ENCODE measurements at regions of chr19 and their contacts with region 1.

Region 1: GRCh38 chr19:38647368-38647965 is at the start of gene ACTN4:
- DNase-seq: peak; percentile 99 to 100 (median 100)
- H3K4me3 ChIP-seq: peak within 1 kb of the TSS; percentile 77
- H3K27ac ChIP-seq: peak within 1 kb of the TSS; percentile 27 to 47
- H3K4me1 ChIP-seq: peaks cover 26% of the 10 kb centered on the region
- H3K27me3 ChIP-seq: no peaks in the 10 kb centered on the region
- CTCF ChIP-seq: peak in 1 of 3 donors; percentile 26
- EP300 ChIP-seq: no peak
- POLR2A ChIP-seq: peak; percentile 95
- total RNA-seq, gene ACTN4: 139 to 419 (median 299) TPM

Region 2: DNA sequence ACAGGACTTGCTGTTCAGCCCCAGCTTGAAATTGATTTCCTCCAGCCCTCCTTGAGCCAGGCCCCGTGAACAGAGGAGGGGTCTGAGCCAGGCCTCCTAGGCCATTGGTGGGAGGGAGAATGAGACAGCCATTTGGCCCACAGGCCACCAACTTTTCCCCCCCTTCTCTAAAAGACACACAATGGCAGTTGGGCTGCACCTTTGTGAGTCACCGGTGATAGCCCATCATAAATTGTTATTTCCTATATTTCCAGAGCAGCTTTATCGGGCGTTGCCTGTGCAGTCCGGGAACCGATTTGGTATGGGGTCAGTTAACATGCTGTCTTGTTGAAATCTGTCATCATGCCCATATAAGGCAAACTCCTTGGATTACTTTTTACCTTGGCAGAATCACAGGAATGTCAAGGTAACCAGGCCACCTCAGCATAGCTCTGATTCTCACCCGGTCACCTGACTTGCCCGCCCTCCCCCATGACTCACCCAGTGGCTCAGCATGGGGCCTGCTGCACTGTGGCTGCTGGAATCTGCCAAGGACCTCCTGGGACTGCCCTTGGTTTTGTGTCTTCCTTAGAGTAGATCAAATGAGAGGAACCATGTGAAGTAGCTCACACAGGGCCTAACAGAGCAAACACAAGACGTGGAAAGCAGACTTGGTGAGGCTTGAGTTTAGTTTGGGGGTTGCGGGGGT is 36.1 kb after region 1 on chr19:
- intact Hi-C with region 1: no loop called
- DNase-seq: peak; percentile 68 to 78 (median 77)
- H3K4me3 ChIP-seq: no peak overlapping the region
- H3K27ac ChIP-seq: peak overlapping the region; percentile 19 to 78
- H3K4me1 ChIP-seq: peaks cover 35% of the 10 kb centered on the region
- H3K27me3 ChIP-seq: no peaks in the 10 kb centered on the region
- CTCF ChIP-seq: no peak
- EP300 ChIP-seq: peak; percentile 8
- POLR2A ChIP-seq: no peak

Region 3: GRCh38 chr19:38711726-38712153 is 64.3 kb after region 1 on chr19:
- intact Hi-C with region 1: loop called in 1 of 4 experiments (anchors 5 kb)
- DNase-seq: peak; percentile 55 to 83 (median 72)
- H3K4me3 ChIP-seq: no peak overlapping the region
- H3K27ac ChIP-seq: peak overlapping the region in 1 of 2 donors; percentile 35
- H3K4me1 ChIP-seq: peaks cover 22% of the 10 kb centered on the region
- H3K27me3 ChIP-seq: no peaks in the 10 kb centered on the region
- CTCF ChIP-seq: no peak
- EP300 ChIP-seq: no peak
- POLR2A ChIP-seq: no peak

Region 4: DNA sequence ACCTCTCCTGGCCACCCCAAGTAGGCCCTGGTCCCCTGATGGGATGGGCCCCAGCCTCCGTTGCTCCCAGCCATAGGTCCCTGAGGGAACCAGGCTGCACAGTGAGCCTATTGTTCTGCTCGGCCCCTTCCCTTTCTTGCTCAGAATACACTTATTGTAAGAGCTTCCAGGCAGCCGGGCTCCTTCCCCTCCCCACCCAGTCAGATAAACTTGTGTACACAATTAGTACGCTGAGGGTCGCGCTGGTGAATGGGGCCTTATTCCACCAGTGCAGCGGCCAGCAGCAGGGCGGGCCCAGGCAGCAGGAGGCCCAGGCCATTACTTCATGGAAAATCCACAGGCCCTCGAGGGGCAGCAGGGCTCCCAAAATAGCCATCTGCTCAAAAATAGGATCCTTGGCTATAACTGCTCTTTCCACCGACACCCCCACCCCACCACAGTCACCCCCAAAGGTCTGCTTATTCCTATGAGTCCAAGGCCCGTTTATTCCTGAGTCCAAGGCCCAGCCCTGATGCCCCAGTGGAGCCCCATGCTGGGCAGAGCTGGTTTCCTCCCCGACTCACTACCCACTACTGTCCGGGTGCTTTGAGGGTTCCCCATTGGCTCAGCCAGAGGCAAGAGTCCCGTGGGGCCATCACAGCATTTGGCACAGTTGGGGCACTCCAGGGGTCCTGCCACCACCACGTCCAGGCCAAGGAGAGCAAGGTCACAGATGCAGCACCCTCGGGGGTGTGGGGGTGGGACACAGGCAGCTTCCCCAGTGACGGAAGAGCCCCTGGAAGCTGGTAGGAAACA is 74.7 kb after region 1 on chr19:
- intact Hi-C with region 1: loop called (anchors 5 kb)
- DNase-seq: peak in 1 of 5 donors; percentile 23
- H3K4me3 ChIP-seq: no peak overlapping the region
- H3K27ac ChIP-seq: no peak overlapping the region
- H3K4me1 ChIP-seq: peaks cover 5% of the 10 kb centered on the region
- H3K27me3 ChIP-seq: no peaks in the 10 kb centered on the region
- CTCF ChIP-seq: no peak
- EP300 ChIP-seq: no peak
- POLR2A ChIP-seq: no peak

Region 5: GRCh38 chr19:38729653-38730469 is 82.4 kb after region 1 on chr19:
- intact Hi-C with region 1: loop called in 3 of 4 experiments (anchors 5 kb)
- DNase-seq: peak; percentile 58 to 83 (median 75)
- H3K4me3 ChIP-seq: no peak overlapping the region
- H3K27ac ChIP-seq: no peak overlapping the region
- H3K4me1 ChIP-seq: peaks cover 10% of the 10 kb centered on the region
- H3K27me3 ChIP-seq: no peaks in the 10 kb centered on the region
- CTCF ChIP-seq: peak; percentile 38 to 56 (median 53)
- EP300 ChIP-seq: no peak
- POLR2A ChIP-seq: no peak

Region 6: GRCh38 chr19:38812841-38813320 is 165.4 kb after region 1 on chr19 and contains the start of gene LGALS4:
- intact Hi-C with region 1: no loop called
- DNase-seq: no peak
- H3K4me3 ChIP-seq: peak within 1 kb of the TSS; percentile 6
- H3K27ac ChIP-seq: no peak within 1 kb of the TSS
- H3K4me1 ChIP-seq: no peaks in the 10 kb centered on the region
- H3K27me3 ChIP-seq: no peaks in the 10 kb centered on the region
- CTCF ChIP-seq: no peak
- EP300 ChIP-seq: no peak
- POLR2A ChIP-seq: no peak
- total RNA-seq, gene LGALS4: 0.57 to 7.4 (median 2.2) TPM

Region 7: GRCh38 chr19:38831142-38831605 is 183.7 kb after region 1 on chr19:
- intact Hi-C with region 1: loop called in 1 of 4 experiments (anchors 10 kb)
- DNase-seq: peak; percentile 46 to 67 (median 61)
- H3K4me3 ChIP-seq: peak overlapping the region; percentile 71
- H3K27ac ChIP-seq: peak overlapping the region; percentile 13 to 76
- H3K4me1 ChIP-seq: peaks cover 7% of the 10 kb centered on the region
- H3K27me3 ChIP-seq: no peaks in the 10 kb centered on the region
- CTCF ChIP-seq: peak in 1 of 3 donors; percentile 35
- EP300 ChIP-seq: no peak
- POLR2A ChIP-seq: no peak

Region 8: DNA sequence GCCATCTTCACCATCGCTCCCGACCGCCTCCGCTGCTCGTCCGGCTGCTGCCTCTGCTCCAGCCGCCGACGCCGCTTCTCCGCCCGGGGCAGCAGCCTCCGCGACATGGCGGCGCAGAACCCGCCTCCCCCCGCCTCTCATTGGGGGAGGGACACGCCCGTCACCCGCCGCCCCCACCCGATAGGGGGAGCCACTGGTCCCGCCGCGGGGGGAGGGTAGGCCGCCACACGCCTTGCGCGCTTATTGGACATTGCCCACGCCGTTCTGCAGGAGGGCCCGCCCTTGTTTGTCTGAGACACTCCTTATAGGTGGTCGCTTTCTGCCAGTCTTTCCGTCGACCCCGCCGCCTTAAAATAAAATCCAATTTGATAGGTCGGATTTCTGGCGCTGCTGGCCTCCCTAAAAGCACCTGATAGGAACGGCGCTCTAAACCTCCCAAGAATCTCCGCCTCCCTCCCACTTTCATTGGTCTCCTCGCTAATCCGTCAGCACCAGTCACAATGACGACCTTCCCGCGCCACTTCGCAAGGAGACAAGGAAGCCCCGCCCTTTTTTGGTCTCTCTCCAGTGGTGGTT is 202.5 kb after region 1 on chr19 and contains the start of gene HNRNPL:
- intact Hi-C with region 1: loop called in 2 of 4 experiments (anchors 5 to 10 kb)
- DNase-seq: peak in 4 of 5 donors; percentile 99 to 100 (median 99)
- H3K4me3 ChIP-seq: peak within 1 kb of the TSS; percentile 99
- H3K27ac ChIP-seq: peak within 1 kb of the TSS; percentile 100
- H3K4me1 ChIP-seq: peaks cover 13% of the 10 kb centered on the region
- H3K27me3 ChIP-seq: no peaks in the 10 kb centered on the region
- CTCF ChIP-seq: peak; percentile 36 to 76 (median 67)
- EP300 ChIP-seq: peak; percentile 35
- POLR2A ChIP-seq: peak; percentile 99
- total RNA-seq, gene HNRNPL: 110 to 282 (median 230) TPM

Measured in ovary (tissue), 10 donors.